SK-N-SH (cell line): ENCODE measurements at regions of chr4 and their contacts with region 1.

Region 1: GRCh38 chr4:38050560-38051350 is 90.6 kb downstream of the PTTG2 start:
- DNase-seq: no peak
- H3K4me3 ChIP-seq: no peak overlapping the region
- H3K27ac ChIP-seq: peak overlapping the region in 1 of 2 experiments; percentile 38; a peak in 2 of 4 replicates
- H3K4me1 ChIP-seq: peaks cover 0 to 10% of the 10 kb centered on the region in 2 experiments; a peak in 2 of 4 replicates
- H3K27me3 ChIP-seq: no peaks in the 10 kb centered on the region
- CTCF ChIP-seq: no peak
- EP300 ChIP-seq: no peak
- RAD21 ChIP-seq: no peak

Region 2: DNA sequence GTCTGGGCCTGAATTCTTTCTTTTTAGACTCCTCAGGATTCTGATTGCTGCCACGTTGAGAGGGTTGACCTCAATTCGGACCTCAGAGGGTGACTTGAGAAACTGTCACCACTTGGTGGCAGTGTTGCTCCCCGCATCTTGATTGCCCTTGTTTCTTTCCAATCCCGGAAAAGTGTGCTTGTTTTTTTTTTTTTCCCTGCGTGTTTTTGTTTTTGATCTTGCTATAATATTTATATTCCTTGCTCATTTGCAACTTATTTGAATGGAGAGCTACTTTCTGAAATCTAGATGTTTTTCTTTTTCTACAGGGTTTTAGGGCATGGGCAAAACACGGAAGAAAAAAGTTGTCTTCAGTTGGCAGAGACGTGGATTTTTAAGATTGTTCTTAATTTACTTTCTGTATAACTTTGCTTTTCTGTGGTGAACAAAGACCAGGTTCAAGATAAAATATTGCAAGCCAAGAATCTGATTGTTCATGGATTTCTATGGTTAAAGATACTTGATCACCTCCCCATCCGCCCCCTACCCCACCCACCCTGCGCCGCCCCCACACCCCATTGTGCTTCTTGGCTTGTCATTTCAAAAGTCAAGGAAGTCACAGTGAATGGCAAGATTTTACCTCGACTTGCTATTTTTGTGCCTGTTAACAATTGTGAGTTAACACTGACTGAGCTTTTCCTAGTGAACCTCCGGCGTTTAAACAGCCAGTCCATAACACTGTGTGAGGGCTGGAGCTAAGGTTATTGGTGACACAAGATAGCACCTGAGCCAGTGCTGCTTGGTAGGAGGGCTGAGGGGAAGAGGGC is 11.5 kb after region 1 on chr4:
- CTCF ChIA-PET with region 1: interaction called, 12 read pairs
- POLR2A ChIA-PET with region 1: no interaction called
- DNase-seq: peak; percentile 71
- H3K4me3 ChIP-seq: peak overlapping the region; percentile 17 to 49; a peak in 2 of 4 replicates
- H3K27ac ChIP-seq: peak overlapping the region; percentile 78 to 89; a peak in 3 of 4 replicates
- H3K4me1 ChIP-seq: peaks cover 11 to 35% of the 10 kb centered on the region in 2 experiments; a peak in 3 of 4 replicates
- H3K27me3 ChIP-seq: no peaks in the 10 kb centered on the region
- CTCF ChIP-seq: peak; percentile 87
- EP300 ChIP-seq: no peak
- RAD21 ChIP-seq: peak; percentile 91